ENCODE measurements at regions of chr9 and their contacts with region 1.

Region 1: DNA sequence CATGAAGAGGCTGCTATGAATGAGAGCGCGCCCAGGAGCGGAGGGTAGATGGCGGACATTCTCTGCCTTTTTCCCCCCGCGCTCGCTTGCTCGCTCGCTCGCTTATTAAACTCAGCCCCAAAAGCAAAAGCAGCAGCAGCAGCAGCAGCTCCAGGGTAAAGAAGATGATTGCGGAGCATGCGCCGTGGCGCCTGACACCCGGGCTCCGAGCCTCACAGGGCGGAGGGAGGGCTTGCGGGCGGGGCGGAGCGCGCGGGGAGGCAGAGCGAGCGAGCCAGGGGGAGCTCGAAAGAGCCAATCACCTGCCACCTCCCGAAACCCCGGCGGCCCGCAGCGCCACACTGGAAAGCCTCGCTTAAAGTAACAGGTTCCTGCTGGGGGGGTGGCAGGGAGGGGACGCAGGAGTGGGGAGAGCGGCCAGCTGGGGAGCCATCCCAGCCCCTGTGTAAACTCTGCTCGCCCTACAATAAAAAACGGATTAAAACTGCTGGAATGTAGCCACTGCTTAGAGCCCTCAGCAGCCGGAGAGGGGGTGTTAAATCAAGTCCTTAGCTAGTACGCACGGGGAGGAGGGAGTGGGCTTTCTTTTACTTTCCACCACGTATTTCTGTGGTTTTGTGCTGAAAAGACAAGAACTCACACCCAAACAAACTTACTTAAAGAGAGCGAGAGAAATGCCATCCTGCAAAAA is at the start of gene MLLT3:
- DNase-seq: peak; percentile 96 to 98
- ATAC-seq: peak; percentile 93 to 99 (median 96)
- H3K4me3 ChIP-seq: peak within 1 kb of the TSS; percentile 66 to 94 (median 88)
- H3K27ac ChIP-seq: peak within 1 kb of the TSS; percentile 82 to 92 (median 85)
- H3K4me1 ChIP-seq: peaks cover 0 to 40% (median 33%) of the 10 kb centered on the region in 9 donors
- H3K27me3 ChIP-seq: peaks cover 0 to 7% (median 0%) of the 10 kb centered on the region in 7 donors
- CTCF ChIP-seq: peak in 5 of 9 donors; percentile 7 to 42 (median 35)
- total RNA-seq, gene MLLT3: 6.3 to 22.7 (median 14.7) TPM

Region 2: DNA sequence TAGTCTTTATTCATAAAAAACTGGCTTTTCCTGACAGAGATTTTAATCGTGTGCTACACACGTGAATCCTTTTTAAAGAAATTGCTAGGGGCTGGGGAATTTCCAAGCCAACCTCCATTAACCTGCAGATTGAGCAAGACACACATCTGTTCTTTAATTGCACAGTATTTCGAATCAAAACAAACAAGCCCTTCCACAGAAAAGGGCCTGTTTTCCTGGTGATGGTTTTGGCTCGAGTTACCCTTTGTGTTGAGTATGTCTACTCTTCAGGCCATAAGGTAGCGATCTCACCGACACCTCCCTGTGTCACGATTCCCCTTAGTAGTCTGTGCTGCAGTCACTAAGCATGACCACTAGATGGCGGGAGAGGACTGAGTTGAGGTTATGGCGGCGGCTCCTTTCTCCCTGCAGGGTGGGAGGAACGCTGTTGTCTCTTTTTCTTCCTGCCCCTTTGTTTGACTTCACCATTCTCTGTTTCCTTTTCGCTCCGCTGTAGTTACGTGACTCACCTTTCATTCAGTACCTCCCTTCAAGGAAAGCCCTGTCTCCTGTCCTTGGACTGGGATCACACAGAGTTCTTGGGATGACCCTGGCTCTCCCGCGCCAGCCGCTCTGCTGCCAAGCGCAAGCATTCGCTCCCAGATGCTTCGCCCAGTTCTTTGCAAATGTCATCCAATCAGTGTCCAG is 696.5 kb before region 1 on chr9:
- intact Hi-C with region 1: loop called in 7 of 10 experiments (anchors 5 to 10 kb)
- DNase-seq: peak; percentile 35 to 72
- ATAC-seq: peak; percentile 84 to 96 (median 94)
- H3K4me3 ChIP-seq: peak overlapping the region in 9 of 10 donors; percentile 2 to 51 (median 45)
- H3K27ac ChIP-seq: no peak overlapping the region
- H3K4me1 ChIP-seq: peaks cover 0 to 11% (median 6%) of the 10 kb centered on the region in 9 donors
- H3K27me3 ChIP-seq: peaks cover 0 to 12% (median 0%) of the 10 kb centered on the region in 7 donors
- CTCF ChIP-seq: peak; percentile 92 to 99 (median 97)

Region 3: DNA sequence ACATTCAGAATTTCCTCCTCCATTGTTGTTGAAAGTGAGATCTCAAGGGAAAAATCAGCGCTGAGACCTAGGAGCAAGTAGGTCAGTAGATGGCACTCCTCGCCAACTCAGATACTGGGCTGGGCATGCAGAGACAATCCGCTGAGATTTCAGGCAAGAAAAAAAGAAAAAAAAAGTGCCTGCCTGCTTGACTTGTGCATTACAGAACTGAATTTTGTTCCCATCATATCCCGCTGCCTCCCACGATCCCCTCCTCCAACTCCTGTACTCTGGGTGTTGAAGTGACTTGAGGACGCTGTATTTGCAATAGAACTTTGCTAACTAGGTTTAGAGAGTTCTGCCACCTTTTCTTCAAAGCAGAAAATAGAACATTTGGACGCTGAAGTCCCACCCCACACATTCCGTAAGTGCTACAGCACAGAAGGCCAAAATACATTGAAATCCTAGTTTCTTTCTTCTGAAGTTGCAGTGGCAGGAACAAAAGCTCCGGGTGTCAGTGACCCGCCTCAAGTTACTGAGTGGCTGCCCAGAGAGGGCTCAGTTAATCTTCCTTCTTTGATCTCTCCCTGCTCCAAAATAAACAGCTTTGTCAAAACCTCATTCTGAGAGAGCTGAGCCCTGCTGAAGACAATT is 266.0 kb before region 1 on chr9:
- intact Hi-C with region 1: loop called in 8 of 10 experiments (anchors 2 to 10 kb)
- DNase-seq: peak; percentile 46 to 79
- ATAC-seq: peak; percentile 77 to 95 (median 91)
- H3K4me3 ChIP-seq: peak overlapping the region in 7 of 10 donors; percentile 0 to 42 (median 33)
- H3K27ac ChIP-seq: peak overlapping the region in 9 of 10 donors; percentile 1 to 76 (median 55)
- H3K4me1 ChIP-seq: peaks cover 0 to 38% (median 17%) of the 10 kb centered on the region in 9 donors
- H3K27me3 ChIP-seq: no peaks in the 10 kb centered on the region
- CTCF ChIP-seq: peak; percentile 55 to 87 (median 69)

Region 4: DNA sequence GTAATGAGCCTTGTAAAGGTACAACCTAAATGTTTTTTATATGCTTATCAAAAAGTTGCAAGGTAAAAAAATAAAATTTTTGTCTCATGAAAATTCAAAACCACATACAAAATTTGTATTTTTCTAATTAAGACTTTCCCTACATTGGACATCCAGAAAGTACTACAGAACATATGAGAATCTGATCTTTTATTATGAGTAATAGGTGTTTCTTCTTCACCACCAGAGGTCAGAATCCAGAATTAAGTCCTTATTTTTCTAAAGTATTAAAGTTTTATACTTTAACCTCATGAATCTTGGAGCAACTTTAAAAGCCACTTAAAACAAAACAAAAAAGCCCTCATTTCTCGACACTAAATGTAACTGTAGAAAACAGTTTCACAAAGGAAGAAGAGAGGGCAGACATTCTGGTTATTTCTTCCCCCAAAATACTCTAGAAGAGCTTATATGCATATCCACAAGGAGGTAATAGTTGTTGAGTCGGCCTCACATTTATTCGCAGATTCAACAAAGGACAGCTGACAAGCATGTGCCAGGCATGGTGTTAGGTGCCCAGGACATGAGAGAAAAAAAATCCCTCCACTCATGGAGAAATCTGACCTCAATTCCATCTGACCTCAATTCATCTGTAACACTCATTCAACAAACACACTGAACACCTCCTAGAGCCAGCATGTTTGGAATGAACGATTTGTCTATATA is 69.5 kb before region 1 on chr9:
- intact Hi-C with region 1: loop called in 6 of 10 experiments (anchors 2 to 10 kb)
- DNase-seq: no peak
- ATAC-seq: peak in 2 of 8 donors; percentile 26 to 37
- H3K4me3 ChIP-seq: no peak overlapping the region
- H3K27ac ChIP-seq: no peak overlapping the region
- H3K4me1 ChIP-seq: peaks cover 5 to 62% (median 29%) of the 10 kb centered on the region in 9 donors
- H3K27me3 ChIP-seq: no peaks in the 10 kb centered on the region
- CTCF ChIP-seq: peak in 8 of 9 donors; percentile 15 to 57 (median 34)

Region 5: GRCh38 chr9:20884985-20885593 is 262.6 kb after region 1 on chr9:
- intact Hi-C with region 1: loop called in 2 of 10 experiments (anchors 10 kb)
- DNase-seq: peak; percentile 24 to 44
- ATAC-seq: no peak
- H3K4me3 ChIP-seq: no peak overlapping the region
- H3K27ac ChIP-seq: no peak overlapping the region
- H3K4me1 ChIP-seq: no peaks in the 10 kb centered on the region
- H3K27me3 ChIP-seq: no peaks in the 10 kb centered on the region
- CTCF ChIP-seq: peak; percentile 28 to 81 (median 67)

Region 6: GRCh38 chr9:20989923-20990341 is 367.5 kb after region 1 on chr9:
- intact Hi-C with region 1: no loop called
- DNase-seq: peak; percentile 22 to 32
- ATAC-seq: peak; percentile 26 to 84 (median 58)
- H3K4me3 ChIP-seq: no peak overlapping the region
- H3K27ac ChIP-seq: peak overlapping the region in 1 of 10 donors; percentile 70
- H3K4me1 ChIP-seq: peaks cover 0 to 23% (median 0%) of the 10 kb centered on the region in 9 donors
- H3K27me3 ChIP-seq: no peaks in the 10 kb centered on the region
- CTCF ChIP-seq: no peak

Region 7: DNA sequence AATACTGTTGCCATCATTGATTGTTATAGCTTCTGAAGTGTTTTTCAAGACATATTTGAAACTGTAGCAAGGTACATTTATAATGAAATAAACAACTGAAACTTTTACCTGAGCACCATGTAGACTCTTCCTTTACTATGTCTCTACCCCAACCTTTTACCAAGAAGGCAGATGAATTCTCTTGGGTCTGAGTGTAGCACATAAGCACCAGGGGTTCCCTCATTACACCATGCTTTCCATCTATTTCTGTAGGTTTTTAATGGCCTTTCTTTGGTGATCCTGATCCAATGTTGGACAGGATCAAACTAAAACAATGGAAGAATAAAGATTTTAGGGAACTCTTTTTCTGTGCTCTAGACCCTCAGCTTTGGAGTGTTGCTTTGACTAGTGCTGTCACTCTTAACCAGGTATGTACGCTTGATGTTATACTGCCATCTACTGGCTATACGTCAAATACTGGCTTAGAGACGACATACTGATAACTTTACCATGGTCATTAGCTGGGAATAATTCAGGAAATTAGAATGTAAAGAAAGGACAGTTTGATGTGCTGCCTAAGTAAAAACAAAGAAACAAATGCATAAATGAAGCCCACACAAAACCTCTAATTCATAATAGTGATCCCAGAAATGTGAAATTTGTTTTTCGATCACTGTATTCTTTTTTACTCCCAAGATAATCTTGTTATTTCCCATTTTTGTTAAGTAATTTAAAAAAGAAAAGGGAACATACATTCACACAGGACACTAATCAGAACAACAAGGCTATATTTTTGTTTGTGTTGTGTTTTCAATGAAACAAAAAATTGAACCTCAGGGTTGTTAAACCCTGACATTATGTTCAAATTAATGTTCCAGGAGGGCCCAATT is 488.5 kb after region 1 on chr9:
- intact Hi-C with region 1: loop called in 4 of 10 experiments (anchors 2 to 10 kb)
- DNase-seq: peak in 1 of 2 donors; percentile 26
- ATAC-seq: peak in 7 of 8 donors; percentile 76 to 92 (median 88)
- H3K4me3 ChIP-seq: no peak overlapping the region
- H3K27ac ChIP-seq: no peak overlapping the region
- H3K4me1 ChIP-seq: no peaks in the 10 kb centered on the region
- H3K27me3 ChIP-seq: no peaks in the 10 kb centered on the region
- CTCF ChIP-seq: peak; percentile 74 to 92 (median 88)

Measured in heart right ventricle (tissue), 16 donors.